Activated naive CD4-positive, alpha-beta T cell treated with anti-CD3 and anti-CD28 coated beads for 36 hours (primary cell): ENCODE measurements at regions of chr1 and their contacts with region 1.

Region 1: DNA sequence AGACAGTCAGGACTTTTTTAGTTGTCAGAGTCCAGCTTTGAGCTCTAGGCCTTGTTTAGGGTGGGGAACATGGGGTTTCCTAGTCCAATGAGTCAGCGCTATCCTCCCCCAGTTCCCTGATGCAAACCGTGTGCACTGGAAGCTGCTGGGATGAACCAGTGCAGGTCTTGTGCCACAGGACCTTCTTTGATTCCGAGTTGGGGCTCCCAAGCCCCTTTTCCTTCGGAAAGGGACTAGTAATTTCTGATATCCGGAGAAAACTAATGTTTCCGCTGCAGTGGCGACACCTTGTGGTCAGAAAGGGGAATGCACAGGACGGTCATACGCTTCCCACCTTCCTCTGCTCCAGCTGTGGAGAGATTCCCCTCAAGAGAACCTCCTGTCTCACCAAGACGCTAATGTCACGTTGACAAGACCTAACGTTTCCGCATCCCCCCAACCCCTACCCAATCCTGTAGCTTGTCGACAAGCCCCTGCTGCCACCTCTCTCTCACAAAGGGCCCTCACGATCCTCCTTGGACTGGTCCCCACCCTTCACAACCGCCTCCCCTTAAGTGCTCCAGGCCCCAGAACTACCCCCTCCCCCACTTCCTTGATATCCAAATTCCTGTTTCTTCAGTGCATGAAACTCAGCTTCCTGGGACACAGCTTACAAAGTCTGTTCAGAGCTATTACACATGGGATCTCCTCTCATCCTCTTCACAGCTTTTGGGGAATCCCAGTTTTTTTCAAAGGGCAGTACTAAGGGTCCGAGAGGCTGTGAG is 30.9 kb downstream of the GPA33 start:
- DNase-seq: peak; percentile 89
- H3K4me3 Mint-ChIP-seq: no peak overlapping the region
- H3K27ac Mint-ChIP-seq: peak overlapping the region; percentile 38
- H3K4me1 Mint-ChIP-seq: peaks cover 11% of the 10 kb centered on the region
- H3K27me3 Mint-ChIP-seq: no peaks in the 10 kb centered on the region

Region 2: DNA sequence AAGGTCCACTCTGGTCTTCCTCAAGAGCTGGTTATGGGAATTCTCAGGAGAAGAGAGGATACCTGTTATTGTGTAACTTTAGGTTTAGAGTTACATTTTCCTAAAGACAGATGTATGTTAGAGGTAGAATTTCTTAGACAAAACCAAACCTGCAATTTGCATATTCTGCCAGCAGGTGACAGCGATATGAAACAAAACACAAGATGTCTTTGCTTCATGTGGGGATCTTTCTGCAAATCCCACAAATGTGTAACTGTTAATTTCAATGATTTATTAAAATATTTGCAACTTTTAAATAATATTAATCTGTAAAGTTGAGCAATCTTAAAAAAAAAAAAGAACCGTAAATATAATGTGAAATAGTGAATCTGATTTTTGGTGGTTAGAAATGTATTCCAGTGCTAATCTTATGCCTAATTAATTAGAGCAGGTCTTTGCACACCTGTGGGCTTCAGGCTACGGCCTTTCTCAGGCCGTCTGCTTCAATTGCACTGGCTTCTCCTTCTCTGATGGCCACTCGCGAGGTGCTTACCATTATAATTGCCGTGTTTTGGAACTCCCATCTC is 925.9 kb before region 1 on chr1:
- CTCF ChIA-PET with region 1: no interaction called
- intact Hi-C with region 1: loop called (anchors 2 kb)
- DNase-seq: peak; percentile 40
- H3K4me3 Mint-ChIP-seq: no peak overlapping the region
- H3K27ac Mint-ChIP-seq: no peak overlapping the region
- H3K4me1 Mint-ChIP-seq: no peaks in the 10 kb centered on the region
- H3K27me3 Mint-ChIP-seq: peaks cover 16% of the 10 kb centered on the region

Region 3: GRCh38 chr1:166884040-166884642 is 175.1 kb before region 1 on chr1:
- CTCF ChIA-PET with region 1: interaction called, 84 read pairs
- intact Hi-C with region 1: loop called (anchors 1 kb)
- DNase-seq: peak; percentile 58
- H3K4me3 Mint-ChIP-seq: no peak overlapping the region
- H3K27ac Mint-ChIP-seq: no peak overlapping the region
- H3K4me1 Mint-ChIP-seq: peaks cover 3% of the 10 kb centered on the region
- H3K27me3 Mint-ChIP-seq: peaks cover 21% of the 10 kb centered on the region

Region 4: GRCh38 chr1:166929911-166930310 is 129.3 kb before region 1 on chr1:
- CTCF ChIA-PET with region 1: interaction called, 11 read pairs
- intact Hi-C with region 1: no loop called
- DNase-seq: no peak
- H3K4me3 Mint-ChIP-seq: no peak overlapping the region
- H3K27ac Mint-ChIP-seq: no peak overlapping the region
- H3K4me1 Mint-ChIP-seq: no peaks in the 10 kb centered on the region
- H3K27me3 Mint-ChIP-seq: no peaks in the 10 kb centered on the region

Region 5: GRCh38 chr1:167082511-167083027 is 23.3 kb after region 1 on chr1:
- CTCF ChIA-PET with region 1: interaction called, 15 read pairs
- intact Hi-C with region 1: no loop called
- DNase-seq: no peak
- H3K4me3 Mint-ChIP-seq: no peak overlapping the region
- H3K27ac Mint-ChIP-seq: no peak overlapping the region
- H3K4me1 Mint-ChIP-seq: peaks cover 13% of the 10 kb centered on the region
- H3K27me3 Mint-ChIP-seq: no peaks in the 10 kb centered on the region

Region 6: GRCh38 chr1:167175901-167176300 is 116.7 kb after region 1 on chr1:
- CTCF ChIA-PET with region 1: interaction called, 12 read pairs
- intact Hi-C with region 1: no loop called
- DNase-seq: no peak
- H3K4me3 Mint-ChIP-seq: no peak overlapping the region
- H3K27ac Mint-ChIP-seq: no peak overlapping the region
- H3K4me1 Mint-ChIP-seq: no peaks in the 10 kb centered on the region
- H3K27me3 Mint-ChIP-seq: peaks cover 2% of the 10 kb centered on the region